ENCODE measurements at regions of chr18 and their contacts with region 1.

Region 1: GRCh38 chr18:22170421-22171262 is 1.3 kb downstream of the GATA6 start:
- DNase-seq: peak; percentile 60 to 67
- H3K4me3 ChIP-seq: peak overlapping the region; percentile 74 to 99 (median 87)
- H3K27ac ChIP-seq: peak overlapping the region; percentile 87 to 97 (median 95)
- H3K4me1 ChIP-seq: peaks cover 17 to 31% of the 10 kb centered on the region in 2 donors
- H3K27me3 ChIP-seq: peaks cover 28% of the 10 kb centered on the region
- CTCF ChIP-seq: no peak
- POLR2A ChIP-seq: no peak

Region 2: DNA sequence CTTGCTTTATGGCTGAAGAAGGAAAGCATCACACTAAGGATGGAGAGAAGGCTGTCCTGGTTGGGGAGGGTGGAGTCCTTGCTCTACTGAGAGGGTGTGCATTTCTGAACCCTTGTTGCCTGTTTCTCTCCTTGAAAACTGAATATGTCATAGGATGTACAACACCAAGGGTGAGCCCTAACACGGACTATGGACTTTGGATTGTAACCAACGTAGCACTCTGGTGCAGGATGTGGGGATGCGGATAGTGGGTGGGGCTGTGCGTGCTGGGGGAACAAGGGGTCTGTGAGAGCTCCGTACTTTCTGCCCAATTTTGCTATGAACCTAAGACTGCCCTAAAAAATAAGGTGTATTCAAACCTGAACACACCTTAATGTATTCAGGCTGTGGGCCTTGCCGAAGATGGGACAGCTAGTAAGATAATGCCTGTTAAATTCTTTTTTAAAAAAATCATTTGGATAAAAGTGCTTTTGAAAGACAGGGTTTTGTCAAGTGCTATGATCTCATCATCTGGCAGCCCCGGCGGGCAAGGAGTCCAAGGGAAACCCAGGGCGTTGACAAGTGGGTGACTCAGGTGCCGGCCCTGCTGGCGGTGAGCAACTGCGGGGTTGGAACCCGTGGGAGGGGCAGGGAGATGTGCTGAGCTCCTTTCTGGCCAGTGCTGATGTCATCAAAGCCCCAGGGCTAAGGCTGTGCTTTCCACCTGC is 52.8 kb after region 1 on chr18:
- intact Hi-C with region 1: no loop called
- DNase-seq: peak; percentile 99
- H3K4me3 ChIP-seq: no peak overlapping the region
- H3K27ac ChIP-seq: peak overlapping the region in 1 of 3 donors; percentile 24
- H3K4me1 ChIP-seq: peaks cover 17 to 32% of the 10 kb centered on the region in 2 donors
- H3K27me3 ChIP-seq: no peaks in the 10 kb centered on the region
- CTCF ChIP-seq: no peak
- POLR2A ChIP-seq: no peak

Region 3: DNA sequence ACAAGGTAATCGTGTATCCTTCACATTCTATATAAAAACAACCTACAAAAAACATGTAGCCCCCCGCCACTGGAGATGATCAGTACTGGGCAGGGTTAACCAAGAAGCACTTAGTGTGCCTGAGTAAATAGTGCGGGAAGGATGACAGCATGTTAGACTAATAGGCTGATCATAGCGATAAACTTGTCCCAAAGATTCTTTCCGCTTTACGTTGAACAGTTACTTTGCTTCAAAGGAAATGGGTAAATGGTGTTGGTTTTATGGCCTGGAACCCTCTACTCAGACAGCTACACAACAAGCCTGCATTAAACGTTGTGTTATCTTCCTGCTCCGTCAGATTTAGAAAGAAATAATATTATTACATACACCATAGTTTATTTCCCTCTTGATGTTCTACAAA is 179.3 kb after region 1 on chr18:
- intact Hi-C with region 1: loop called (anchors 10 kb)
- DNase-seq: no peak
- H3K4me3 ChIP-seq: no peak overlapping the region
- H3K27ac ChIP-seq: no peak overlapping the region
- H3K4me1 ChIP-seq: peaks cover 24 to 42% of the 10 kb centered on the region in 2 donors
- H3K27me3 ChIP-seq: no peaks in the 10 kb centered on the region
- CTCF ChIP-seq: no peak
- POLR2A ChIP-seq: no peak

Measured in thyroid gland (tissue), 4 donors.